ENCODE measurements at regions of chr12 and their contacts with region 1.

Region 1: DNA sequence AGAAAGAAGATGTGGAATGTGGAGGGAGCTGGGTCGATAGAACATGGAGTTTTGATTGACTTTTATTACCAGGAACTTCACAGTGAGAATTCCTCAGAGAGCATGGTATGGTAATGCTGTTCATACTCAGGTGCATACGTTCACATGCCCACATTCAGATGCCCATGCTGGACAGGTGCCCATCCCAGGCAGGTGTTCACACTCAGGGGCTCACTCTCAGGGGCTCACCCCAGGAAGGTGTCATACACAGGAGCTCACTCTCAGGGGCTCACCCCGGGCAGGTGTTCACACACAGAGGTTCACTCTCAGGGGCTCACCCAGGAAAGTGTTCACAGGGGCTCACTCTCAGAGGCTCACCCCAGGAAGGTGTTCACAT is 360.0 kb upstream of the SFSWAP start:
- DNase-seq: no peak
- ATAC-seq: no peak
- H3K4me3 ChIP-seq: no peak overlapping the region
- H3K27ac ChIP-seq: no peak overlapping the region
- H3K4me1 ChIP-seq: no peaks in the 10 kb centered on the region
- H3K27me3 ChIP-seq: no peaks in the 10 kb centered on the region; the same call in 1 of the 2 replicates
- CTCF ChIP-seq: no peak

Region 2: GRCh38 chr12:131229426-131230339 is 121.2 kb before region 1 on chr12:
- CTCF ChIA-PET with region 1: no interaction called
- POLR2A ChIA-PET with region 1: no interaction called
- in situ Hi-C with region 1: no loop called
- intact Hi-C with region 1: no loop called
- DNase-seq: no peak
- ATAC-seq: 0 out of 2 replicates have a peak, but pooled peaks have one; percentile 48
- H3K4me3 ChIP-seq: no peak overlapping the region
- H3K27ac ChIP-seq: no peak overlapping the region
- H3K4me1 ChIP-seq: no peaks in the 10 kb centered on the region
- H3K27me3 ChIP-seq: no peaks in the 10 kb centered on the region
- CTCF ChIP-seq: no peak

Region 3: GRCh38 chr12:131379738-131380137 is 28.8 kb after region 1 on chr12:
- CTCF ChIA-PET with region 1: no interaction called
- POLR2A ChIA-PET with region 1: no interaction called
- in situ Hi-C with region 1: no loop called
- intact Hi-C with region 1: no loop called
- DNase-seq: no peak
- ATAC-seq: no peak
- H3K4me3 ChIP-seq: no peak overlapping the region
- H3K27ac ChIP-seq: no peak overlapping the region
- H3K4me1 ChIP-seq: no peaks in the 10 kb centered on the region
- H3K27me3 ChIP-seq: peaks cover 4% of the 10 kb centered on the region; the same call in 1 of the 2 replicates
- CTCF ChIP-seq: no peak

Region 4: DNA sequence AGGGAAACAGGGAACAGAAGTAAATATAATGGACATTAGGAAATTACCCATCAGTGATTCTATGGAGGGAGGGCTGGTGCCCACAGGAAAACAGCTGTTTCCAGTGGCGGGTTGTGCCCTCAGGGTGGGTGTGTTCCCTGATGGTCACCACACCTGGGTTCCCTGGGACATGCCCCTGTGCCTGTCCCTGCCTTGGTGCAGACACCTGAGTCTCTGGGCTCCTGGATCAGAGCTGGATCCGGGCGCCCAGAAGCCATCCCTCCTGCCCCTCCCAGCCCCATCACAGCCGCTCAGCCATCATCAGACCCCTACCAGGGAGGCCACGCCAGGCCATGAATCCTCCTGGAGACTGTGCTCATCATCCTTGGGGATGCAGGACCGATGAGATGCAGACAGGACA is 52.7 kb after region 1 on chr12:
- CTCF ChIA-PET with region 1: no interaction called
- POLR2A ChIA-PET with region 1: interaction called, 10 read pairs
- in situ Hi-C with region 1: no loop called
- intact Hi-C with region 1: no loop called
- DNase-seq: no peak
- ATAC-seq: no peak
- H3K4me3 ChIP-seq: no peak overlapping the region
- H3K27ac ChIP-seq: no peak overlapping the region
- H3K4me1 ChIP-seq: no peaks in the 10 kb centered on the region
- H3K27me3 ChIP-seq: peaks cover 4% of the 10 kb centered on the region; the same call in 1 of the 2 replicates
- CTCF ChIP-seq: no peak

Measured in Panc1 (cell line).